WTC11 (cell line): ENCODE measurements at regions of chr17 and their contacts with region 1.

Region 1: GRCh38 chr17:19648475-19649406 is at the start of gene ALDH3A2:
- DNase-seq: peak; percentile 89
- ATAC-seq: peak; percentile 83
- H3K4me3 Mint-ChIP-seq: peak within 1 kb of the TSS; percentile 92
- H3K27ac Mint-ChIP-seq: peak within 1 kb of the TSS; percentile 84
- H3K4me1 Mint-ChIP-seq: peaks cover 58% of the 10 kb centered on the region
- H3K27me3 Mint-ChIP-seq: peaks cover 8% of the 10 kb centered on the region
- CTCF ChIP-seq: no peak
- total RNA-seq, gene ALDH3A2: 68.5 to 84.3 TPM (median 80.6 TPM) in 3 replicates

Region 2: GRCh38 chr17:19398301-19399181 is 250.2 kb before region 1 on chr17:
- CTCF ChIA-PET with region 1: interaction called, 18 read pairs
- POLR2A ChIA-PET with region 1: no interaction called
- DNase-seq: no peak
- ATAC-seq: no peak
- H3K4me3 Mint-ChIP-seq: no peak overlapping the region
- H3K27ac Mint-ChIP-seq: peak overlapping the region; percentile 51; the same call in 1 of the 2 replicates
- H3K4me1 Mint-ChIP-seq: peaks cover 11% of the 10 kb centered on the region
- H3K27me3 Mint-ChIP-seq: no peaks in the 10 kb centered on the region; the same call in 1 of the 2 replicates
- CTCF ChIP-seq: no peak

Region 3: GRCh38 chr17:19567216-19568015 is 81.3 kb before region 1 on chr17:
- CTCF ChIA-PET with region 1: interaction called, 17 read pairs
- POLR2A ChIA-PET with region 1: interaction called, 4 read pairs
- DNase-seq: peak; percentile 21
- ATAC-seq: peak; percentile 82
- H3K4me3 Mint-ChIP-seq: no peak overlapping the region
- H3K27ac Mint-ChIP-seq: no peak overlapping the region
- H3K4me1 Mint-ChIP-seq: no peaks in the 10 kb centered on the region
- H3K27me3 Mint-ChIP-seq: no peaks in the 10 kb centered on the region; the same call in 1 of the 2 replicates
- CTCF ChIP-seq: no peak; the same call in 1 of the 2 replicates

Region 4: GRCh38 chr17:19614900-19615299 is 33.8 kb before region 1 on chr17:
- CTCF ChIA-PET with region 1: interaction called, 21 read pairs
- POLR2A ChIA-PET with region 1: no interaction called
- DNase-seq: no peak
- ATAC-seq: no peak
- H3K4me3 Mint-ChIP-seq: no peak overlapping the region
- H3K27ac Mint-ChIP-seq: no peak overlapping the region
- H3K4me1 Mint-ChIP-seq: no peaks in the 10 kb centered on the region
- H3K27me3 Mint-ChIP-seq: peaks cover 6% of the 10 kb centered on the region; the same call in 1 of the 2 replicates
- CTCF ChIP-seq: no peak

Region 5: DNA sequence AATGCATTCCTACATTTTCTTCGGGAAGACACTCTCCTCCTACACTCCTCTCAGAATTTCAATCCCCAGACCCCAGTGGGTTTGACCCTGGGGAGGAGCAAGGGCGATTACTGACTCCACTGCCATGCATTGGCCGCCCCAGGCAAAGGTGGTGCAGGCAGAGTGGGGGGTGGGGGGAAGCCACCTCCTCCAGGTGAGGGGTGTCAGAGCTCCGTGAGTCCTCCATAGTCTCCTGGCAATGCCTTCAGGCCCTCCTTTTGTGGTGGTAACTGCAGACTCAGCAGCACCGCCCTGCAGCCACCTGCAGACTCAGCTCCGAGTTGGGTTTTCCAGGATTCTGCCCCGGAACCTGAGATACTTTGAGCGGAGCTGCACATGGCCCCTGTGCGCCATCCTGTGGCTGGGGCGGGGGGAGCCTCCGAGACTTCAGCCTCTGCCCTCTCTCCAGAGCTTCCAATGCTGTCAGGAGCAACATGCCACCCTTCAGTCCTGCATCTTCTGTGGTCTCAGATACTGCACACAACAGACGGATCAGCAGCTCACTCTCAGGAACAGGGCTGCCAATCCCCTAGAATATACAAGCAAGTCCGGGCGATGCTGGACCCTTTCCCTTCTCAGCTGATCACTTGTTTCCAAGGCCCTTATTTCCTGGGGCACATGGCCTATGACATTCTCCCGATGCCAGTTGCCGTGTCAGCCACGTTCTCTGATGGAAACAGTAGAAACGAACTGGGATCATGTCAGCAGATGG is 70.0 kb after region 1 on chr17:
- CTCF ChIA-PET with region 1: interaction called, 40 read pairs
- POLR2A ChIA-PET with region 1: no interaction called
- DNase-seq: peak; percentile 75
- ATAC-seq: peak; percentile 82
- H3K4me3 Mint-ChIP-seq: no peak overlapping the region
- H3K27ac Mint-ChIP-seq: no peak overlapping the region
- H3K4me1 Mint-ChIP-seq: peaks cover 6% of the 10 kb centered on the region; the same call in 1 of the 2 replicates
- H3K27me3 Mint-ChIP-seq: no peaks in the 10 kb centered on the region; the same call in 1 of the 2 replicates
- CTCF ChIP-seq: peak; percentile 18; the same call in 1 of the 2 replicates

Region 6: GRCh38 chr17:19897901-19898300 is 249.2 kb after region 1 on chr17:
- CTCF ChIA-PET with region 1: no interaction called
- POLR2A ChIA-PET with region 1: no interaction called
- DNase-seq: no peak
- ATAC-seq: no peak
- H3K4me3 Mint-ChIP-seq: no peak overlapping the region
- H3K27ac Mint-ChIP-seq: 0 out of 2 replicates have a peak overlapping the region, but pooled peaks have one; percentile 6
- H3K4me1 Mint-ChIP-seq: peaks cover 6% of the 10 kb centered on the region
- H3K27me3 Mint-ChIP-seq: no peaks in the 10 kb centered on the region
- CTCF ChIP-seq: no peak